Activated B cell treated with CpG ODN at 0.5 μM for 24 hours (primary cell): ENCODE measurements at regions of chr7 and their contacts with region 1.

Region 1: DNA sequence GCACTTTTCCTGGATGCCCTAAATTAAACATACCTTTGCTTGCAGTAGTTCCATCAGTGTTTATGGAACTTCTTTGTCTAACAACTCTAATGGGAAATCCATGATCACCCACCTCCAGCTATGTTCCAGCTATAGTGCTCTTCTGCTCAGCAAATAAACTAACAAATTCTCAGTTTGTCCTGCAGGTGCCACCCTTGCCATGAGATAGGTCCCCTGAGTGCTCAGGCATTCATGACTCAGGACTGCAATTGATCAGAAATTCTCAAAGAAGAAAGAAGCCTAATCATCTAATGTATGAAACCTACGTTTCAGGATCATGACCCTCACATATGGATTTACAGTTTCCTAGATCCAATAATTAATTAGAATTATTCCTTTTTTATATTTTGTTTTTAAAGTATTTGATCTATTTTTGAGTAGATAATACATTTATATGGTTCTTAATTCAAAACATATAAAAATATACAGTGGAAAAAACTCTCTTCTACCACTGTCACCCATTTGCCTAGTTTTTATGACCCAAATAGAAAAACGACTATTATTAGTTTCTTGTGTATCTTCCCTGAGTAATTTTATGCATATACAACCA is 48.7 kb upstream of the DYNC1I1 start:
- DNase-seq: no peak
- ATAC-seq: peak; percentile 52
- H3K4me3 Mint-ChIP-seq: no peak overlapping the region
- H3K27ac Mint-ChIP-seq: no peak overlapping the region
- H3K4me1 Mint-ChIP-seq: no peaks in the 10 kb centered on the region
- H3K27me3 Mint-ChIP-seq: peaks cover 16% of the 10 kb centered on the region
- CTCF ChIP-seq: no peak

Region 2: DNA sequence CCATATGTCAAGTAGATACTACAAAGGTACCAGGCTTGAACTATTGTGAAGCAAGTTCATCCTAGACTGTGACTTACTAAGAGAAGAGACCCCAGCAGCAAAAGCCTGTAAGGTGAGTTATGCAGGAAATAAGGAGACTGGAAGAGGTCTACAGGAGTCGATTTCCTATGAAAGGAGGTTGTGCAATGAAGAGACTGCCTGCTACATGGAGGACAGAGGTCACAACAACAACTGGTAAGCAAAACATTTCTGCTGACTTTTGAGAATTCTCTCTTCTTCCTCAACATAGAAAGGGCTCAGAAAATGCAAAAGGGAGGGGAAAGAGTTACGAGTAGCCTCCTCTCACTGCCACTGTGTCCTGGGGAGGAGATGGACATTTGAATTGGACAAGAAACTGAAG is 169.7 kb before region 1 on chr7:
- CTCF ChIA-PET with region 1: no interaction called
- POLR2A ChIA-PET with region 1: no interaction called
- intact Hi-C with region 1: no loop called
- DNase-seq: no peak
- ATAC-seq: no peak
- H3K4me3 Mint-ChIP-seq: no peak overlapping the region
- H3K27ac Mint-ChIP-seq: no peak overlapping the region
- H3K4me1 Mint-ChIP-seq: no peaks in the 10 kb centered on the region
- H3K27me3 Mint-ChIP-seq: peaks cover 4% of the 10 kb centered on the region
- CTCF ChIP-seq: no peak

Region 3: GRCh38 chr7:95628831-95629439 is 94.8 kb before region 1 on chr7:
- CTCF ChIA-PET with region 1: no interaction called
- POLR2A ChIA-PET with region 1: no interaction called
- intact Hi-C with region 1: no loop called
- DNase-seq: no peak
- ATAC-seq: no peak
- H3K4me3 Mint-ChIP-seq: no peak overlapping the region
- H3K27ac Mint-ChIP-seq: no peak overlapping the region
- H3K4me1 Mint-ChIP-seq: no peaks in the 10 kb centered on the region
- H3K27me3 Mint-ChIP-seq: peaks cover 3% of the 10 kb centered on the region
- CTCF ChIP-seq: no peak

Region 4: GRCh38 chr7:95871078-95871782 is 147.5 kb after region 1 on chr7:
- CTCF ChIA-PET with region 1: interaction called, 4 read pairs
- POLR2A ChIA-PET with region 1: no interaction called
- intact Hi-C with region 1: loop called (anchors 1 kb)
- DNase-seq: no peak
- ATAC-seq: no peak
- H3K4me3 Mint-ChIP-seq: no peak overlapping the region
- H3K27ac Mint-ChIP-seq: no peak overlapping the region
- H3K4me1 Mint-ChIP-seq: no peaks in the 10 kb centered on the region
- H3K27me3 Mint-ChIP-seq: peaks cover 7% of the 10 kb centered on the region
- CTCF ChIP-seq: no peak

Region 5: DNA sequence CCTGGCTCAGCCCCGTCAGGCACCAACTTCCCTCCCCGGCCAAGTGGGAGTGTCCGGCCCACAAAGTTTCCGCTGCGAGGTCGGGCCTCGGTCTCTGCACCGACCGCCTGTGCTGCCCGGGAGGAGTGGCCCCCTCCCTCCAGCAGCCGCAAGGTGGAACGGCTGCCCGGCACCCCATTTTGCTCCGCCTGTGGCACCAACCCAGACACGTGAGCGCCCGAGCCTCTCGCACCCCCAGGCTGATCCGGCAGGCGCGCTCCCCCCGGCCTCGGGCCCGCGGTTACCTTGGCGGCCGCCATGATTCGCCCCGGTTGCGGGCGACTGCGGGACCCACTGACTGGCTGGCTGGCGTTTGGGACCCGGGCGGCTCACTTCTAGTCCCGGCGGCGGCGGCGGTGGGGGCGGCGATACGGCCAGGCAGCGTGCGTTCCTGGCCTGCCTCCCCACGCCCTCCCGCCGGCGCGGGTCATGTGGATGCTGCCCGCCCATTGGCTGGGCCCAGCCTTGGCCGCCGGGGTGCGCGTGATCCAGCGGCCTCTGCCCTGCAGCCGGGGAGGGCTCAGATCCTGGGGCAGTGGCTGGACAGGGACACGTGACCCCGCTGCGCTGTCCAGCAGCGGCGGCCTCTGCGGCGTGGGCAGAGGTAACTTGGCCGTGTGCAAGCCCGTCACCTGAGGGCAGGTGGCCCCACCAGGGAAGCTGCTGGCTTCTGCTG is 598.1 kb after region 1 on chr7 and contains the start of gene SLC25A13:
- CTCF ChIA-PET with region 1: no interaction called
- POLR2A ChIA-PET with region 1: no interaction called
- intact Hi-C with region 1: loop called (anchors 10 kb)
- DNase-seq: peak; percentile 69
- ATAC-seq: peak; percentile 71
- H3K4me3 Mint-ChIP-seq: peak within 1 kb of the TSS; percentile 90
- H3K27ac Mint-ChIP-seq: peak within 1 kb of the TSS; percentile 88
- H3K4me1 Mint-ChIP-seq: peaks cover 41% of the 10 kb centered on the region
- H3K27me3 Mint-ChIP-seq: no peaks in the 10 kb centered on the region
- CTCF ChIP-seq: no peak
- total RNA-seq, gene SLC25A13: 28.5 and 29.1 TPM in 2 replicates